ENCODE measurements at regions of chr1 and their contacts with region 1.

Region 1: GRCh38 chr1:186304982-186305949 is 69.8 kb downstream of the TPR start:
- DNase-seq: no peak
- H3K4me3 Mint-ChIP-seq: no peak overlapping the region
- H3K27ac Mint-ChIP-seq: peak overlapping the region; percentile 69
- H3K4me1 Mint-ChIP-seq: peaks cover 54% of the 10 kb centered on the region
- H3K27me3 Mint-ChIP-seq: no peaks in the 10 kb centered on the region

Region 2: DNA sequence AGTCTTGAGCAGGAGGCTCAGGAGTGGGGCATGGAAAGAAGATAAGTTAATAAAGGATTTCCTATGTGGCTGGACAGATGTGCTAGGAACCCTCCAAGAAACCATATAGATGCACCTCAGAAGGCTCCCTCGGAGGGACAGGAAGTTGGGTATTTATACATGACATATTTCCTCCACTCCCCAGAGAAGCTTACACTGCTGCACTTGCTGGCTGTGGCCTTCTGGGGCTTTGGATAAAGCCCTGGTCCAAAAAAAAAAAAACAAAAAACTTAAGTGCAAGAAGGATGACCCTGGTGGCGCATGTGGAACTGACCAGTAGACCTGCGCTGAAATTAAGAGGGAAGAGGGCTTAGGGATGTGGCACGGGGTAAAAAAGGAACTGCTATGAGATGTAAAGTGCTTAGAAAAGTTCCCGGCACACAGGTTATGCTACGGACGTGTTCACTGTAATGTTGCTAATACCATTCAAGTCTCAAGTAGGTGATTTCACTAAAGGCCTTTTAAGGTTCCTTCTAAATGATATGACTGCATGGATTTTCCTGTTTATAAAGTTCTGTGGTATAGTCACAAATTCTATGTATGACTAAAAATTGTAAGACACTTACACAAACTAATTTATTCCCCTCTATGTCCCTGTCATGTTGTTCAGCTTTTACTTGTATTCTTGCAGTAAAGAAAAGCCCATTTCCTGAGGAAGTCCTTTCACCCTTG is 317.5 kb before region 1 on chr1:
- CTCF ChIA-PET with region 1: no interaction called
- POLR2A ChIA-PET with region 1: no interaction called
- intact Hi-C with region 1: loop called (anchors 1 kb)
- DNase-seq: peak; percentile 11
- H3K4me3 Mint-ChIP-seq: peak overlapping the region; percentile 52
- H3K27ac Mint-ChIP-seq: peak overlapping the region; percentile 93
- H3K4me1 Mint-ChIP-seq: peaks cover 12% of the 10 kb centered on the region
- H3K27me3 Mint-ChIP-seq: no peaks in the 10 kb centered on the region

Region 3: GRCh38 chr1:186155594-186155993 is 149.7 kb before region 1 on chr1:
- CTCF ChIA-PET with region 1: no interaction called
- POLR2A ChIA-PET with region 1: no interaction called
- intact Hi-C with region 1: loop called (anchors 10 kb)
- DNase-seq: no peak
- H3K4me3 Mint-ChIP-seq: no peak overlapping the region
- H3K27ac Mint-ChIP-seq: no peak overlapping the region
- H3K4me1 Mint-ChIP-seq: no peaks in the 10 kb centered on the region
- H3K27me3 Mint-ChIP-seq: no peaks in the 10 kb centered on the region

Region 4: DNA sequence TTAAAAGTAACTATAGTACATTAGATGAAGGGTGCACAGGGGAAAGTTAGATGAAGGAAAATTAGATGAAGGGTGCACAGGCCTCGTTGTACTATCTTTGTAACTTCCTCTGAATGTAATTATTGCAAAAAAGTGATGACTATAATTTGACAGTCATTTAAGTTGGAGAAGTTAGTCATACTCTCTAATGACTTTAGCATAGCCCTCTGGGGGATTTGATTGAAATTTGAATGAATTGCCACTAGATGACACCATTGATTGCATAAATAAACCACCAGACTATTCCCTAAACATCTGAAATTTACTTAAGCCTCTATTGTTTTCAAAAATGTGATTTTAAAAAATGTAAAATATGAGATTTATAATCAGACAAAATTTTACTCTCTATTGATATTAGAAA is 32.8 kb before region 1 on chr1:
- CTCF ChIA-PET with region 1: no interaction called
- POLR2A ChIA-PET with region 1: no interaction called
- intact Hi-C with region 1: loop called (anchors 1 kb)
- DNase-seq: no peak
- H3K4me3 Mint-ChIP-seq: no peak overlapping the region
- H3K27ac Mint-ChIP-seq: no peak overlapping the region
- H3K4me1 Mint-ChIP-seq: peaks cover 4% of the 10 kb centered on the region
- H3K27me3 Mint-ChIP-seq: no peaks in the 10 kb centered on the region

Region 5: GRCh38 chr1:186289943-186290545 is 15.2 kb before region 1 on chr1:
- CTCF ChIA-PET with region 1: interaction called, 16 read pairs
- POLR2A ChIA-PET with region 1: interaction called, 5 read pairs
- intact Hi-C with region 1: loop called (anchors 1 kb)
- DNase-seq: no peak
- H3K4me3 Mint-ChIP-seq: peak overlapping the region; percentile 24
- H3K27ac Mint-ChIP-seq: peak overlapping the region; percentile 92
- H3K4me1 Mint-ChIP-seq: peaks cover 65% of the 10 kb centered on the region
- H3K27me3 Mint-ChIP-seq: peaks cover 2% of the 10 kb centered on the region

Region 6: DNA sequence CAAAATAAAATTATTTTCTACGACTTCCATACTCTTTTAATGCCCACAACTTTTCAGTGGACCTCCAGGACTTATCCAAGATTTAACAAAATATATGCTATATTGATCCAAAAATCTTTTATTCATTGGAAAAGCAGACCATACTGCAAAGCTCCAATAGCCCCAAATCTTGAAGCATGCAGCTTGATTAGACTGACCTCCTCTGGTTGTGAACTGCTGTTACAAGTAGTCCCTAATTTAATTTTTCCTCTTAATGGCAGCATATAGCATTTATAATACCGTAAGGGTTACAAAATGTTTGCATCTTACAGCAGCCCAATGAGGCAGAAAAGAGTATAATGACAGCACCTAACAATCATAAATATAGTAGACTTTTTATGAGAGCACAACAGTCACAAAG is 20.0 kb after region 1 on chr1:
- CTCF ChIA-PET with region 1: interaction called, 12 read pairs
- POLR2A ChIA-PET with region 1: no interaction called
- intact Hi-C with region 1: loop called (anchors 1 kb)
- DNase-seq: no peak
- H3K4me3 Mint-ChIP-seq: no peak overlapping the region
- H3K27ac Mint-ChIP-seq: no peak overlapping the region
- H3K4me1 Mint-ChIP-seq: peaks cover 5% of the 10 kb centered on the region
- H3K27me3 Mint-ChIP-seq: no peaks in the 10 kb centered on the region

Region 7: DNA sequence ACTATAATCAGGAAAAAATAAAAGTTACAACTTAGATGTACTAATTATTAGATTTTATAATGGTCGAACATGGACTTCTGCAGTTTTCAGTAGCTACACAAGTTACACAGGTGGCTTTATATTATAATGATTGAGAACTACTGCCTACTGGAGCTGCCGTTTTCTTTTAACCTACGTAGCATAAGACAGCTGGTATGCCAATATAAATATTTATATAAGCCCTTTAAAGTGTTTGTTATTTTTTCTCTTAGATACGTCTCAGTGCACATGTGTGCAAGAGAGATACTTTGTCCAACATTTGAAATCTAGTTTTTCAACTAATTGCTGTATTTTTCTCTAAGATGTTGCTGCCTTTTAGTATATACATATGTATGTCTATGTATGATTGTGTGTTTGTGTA is 113.2 kb after region 1 on chr1:
- CTCF ChIA-PET with region 1: no interaction called
- POLR2A ChIA-PET with region 1: no interaction called
- intact Hi-C with region 1: no loop called
- DNase-seq: no peak
- H3K4me3 Mint-ChIP-seq: no peak overlapping the region
- H3K27ac Mint-ChIP-seq: no peak overlapping the region
- H3K4me1 Mint-ChIP-seq: peaks cover 11% of the 10 kb centered on the region
- H3K27me3 Mint-ChIP-seq: no peaks in the 10 kb centered on the region

Region 8: DNA sequence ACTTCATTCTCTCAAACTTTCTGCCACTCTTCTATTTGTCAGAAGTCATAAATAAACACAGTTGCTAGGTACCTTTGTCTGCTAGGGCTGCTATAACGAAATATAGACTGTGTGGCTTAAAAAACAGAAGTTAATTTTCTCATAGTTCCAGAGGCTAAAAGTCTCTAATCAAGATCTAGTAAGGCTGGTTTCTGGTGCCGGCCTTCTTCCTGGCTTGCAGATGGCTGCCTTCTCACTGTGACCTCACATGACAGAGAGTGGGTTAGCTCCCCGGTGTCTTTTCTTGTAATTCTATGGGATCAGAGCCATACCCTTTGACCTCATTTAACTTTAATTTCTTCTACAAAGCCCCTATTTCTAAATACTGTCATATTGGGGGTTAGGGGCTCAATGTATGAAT is 149.7 kb after region 1 on chr1:
- CTCF ChIA-PET with region 1: no interaction called
- POLR2A ChIA-PET with region 1: no interaction called
- intact Hi-C with region 1: no loop called
- DNase-seq: no peak
- H3K4me3 Mint-ChIP-seq: no peak overlapping the region
- H3K27ac Mint-ChIP-seq: no peak overlapping the region
- H3K4me1 Mint-ChIP-seq: no peaks in the 10 kb centered on the region
- H3K27me3 Mint-ChIP-seq: no peaks in the 10 kb centered on the region